PC-9 (cell line): ENCODE measurements at regions of chr3 and their contacts with region 1.

Region 1: DNA sequence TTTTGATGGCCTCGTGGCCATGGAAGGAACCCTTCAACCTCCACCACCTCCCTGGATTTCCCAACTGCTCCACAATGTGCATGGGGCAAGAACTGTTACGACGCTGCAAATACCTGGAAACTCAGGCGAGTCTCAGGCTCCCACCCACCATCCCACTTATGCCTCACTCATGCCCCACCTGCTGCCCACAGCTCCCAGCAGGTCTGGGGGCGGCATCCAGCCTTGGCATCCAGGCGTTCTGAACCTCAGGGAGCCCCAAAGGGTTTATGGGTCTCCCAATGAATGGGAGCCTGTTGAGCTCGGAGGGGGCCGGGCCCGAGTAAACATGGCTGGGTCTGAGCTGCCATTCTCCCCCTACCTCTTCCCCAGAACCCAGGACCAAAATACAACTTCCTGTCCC is 2.0 kb upstream of the PTH1R start:
- DNase-seq: no peak
- H3K4me3 ChIP-seq: no peak overlapping the region
- H3K27ac ChIP-seq: no peak overlapping the region
- H3K4me1 ChIP-seq: peaks cover 12% of the 10 kb centered on the region
- H3K27me3 ChIP-seq: no peaks in the 10 kb centered on the region
- CTCF ChIP-seq: no peak

Region 2: DNA sequence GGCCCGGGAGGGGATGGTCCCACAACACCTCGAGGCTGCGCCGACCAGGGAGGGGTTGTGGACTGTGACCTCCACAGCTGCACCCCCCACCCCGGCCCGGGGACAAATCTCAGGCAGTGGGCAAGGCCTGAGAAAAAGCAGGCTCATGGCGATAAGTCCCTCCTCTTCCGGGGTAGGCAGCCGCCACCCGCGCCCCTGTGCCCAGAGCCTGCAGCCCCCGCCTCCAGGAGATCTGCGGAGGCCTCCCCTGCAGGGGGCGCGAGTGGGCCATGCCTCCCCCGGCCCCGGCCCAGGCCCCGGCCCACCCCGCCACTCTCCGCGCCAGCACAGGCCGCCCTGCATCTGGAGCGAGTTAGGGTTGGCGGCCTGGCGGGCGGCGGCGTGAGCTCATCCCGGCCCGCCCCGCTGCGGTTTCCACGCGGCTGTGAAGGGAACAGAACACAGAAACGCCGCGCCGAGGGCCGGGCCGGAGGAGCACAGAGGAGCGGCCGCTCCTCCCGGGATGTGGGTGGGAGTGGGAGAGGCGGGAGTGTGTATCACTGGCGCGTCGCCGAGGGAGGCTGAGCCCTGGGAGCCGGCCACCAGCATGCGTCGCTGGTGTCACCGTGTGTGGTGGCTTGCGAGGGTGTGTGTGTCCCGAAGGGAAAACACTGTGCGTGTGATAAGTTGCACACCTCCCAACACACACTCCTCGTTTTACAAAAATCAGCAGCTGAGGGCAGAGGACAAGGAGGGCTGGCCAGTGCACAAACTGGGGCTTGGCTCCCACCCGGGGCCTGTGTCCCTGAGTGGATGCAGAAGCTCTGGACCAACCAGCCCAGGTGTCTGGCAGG is 29.6 kb before region 1 on chr3:
- CTCF ChIA-PET with region 1: interaction called, 13 read pairs
- POLR2A ChIA-PET with region 1: no interaction called
- intact Hi-C with region 1: no loop called
- DNase-seq: peak in 1 of 2 experiments; percentile 88
- H3K4me3 ChIP-seq: peak overlapping the region; percentile 59; the same call in 1 of the 2 replicates
- H3K27ac ChIP-seq: no peak overlapping the region
- H3K4me1 ChIP-seq: 0 out of 2 replicates have a peak, but pooled peaks cover 5% of the 10 kb centered on the region
- H3K27me3 ChIP-seq: no peaks in the 10 kb centered on the region
- CTCF ChIP-seq: peak; percentile 48; the same call in 1 of the 2 replicates

Region 3: DNA sequence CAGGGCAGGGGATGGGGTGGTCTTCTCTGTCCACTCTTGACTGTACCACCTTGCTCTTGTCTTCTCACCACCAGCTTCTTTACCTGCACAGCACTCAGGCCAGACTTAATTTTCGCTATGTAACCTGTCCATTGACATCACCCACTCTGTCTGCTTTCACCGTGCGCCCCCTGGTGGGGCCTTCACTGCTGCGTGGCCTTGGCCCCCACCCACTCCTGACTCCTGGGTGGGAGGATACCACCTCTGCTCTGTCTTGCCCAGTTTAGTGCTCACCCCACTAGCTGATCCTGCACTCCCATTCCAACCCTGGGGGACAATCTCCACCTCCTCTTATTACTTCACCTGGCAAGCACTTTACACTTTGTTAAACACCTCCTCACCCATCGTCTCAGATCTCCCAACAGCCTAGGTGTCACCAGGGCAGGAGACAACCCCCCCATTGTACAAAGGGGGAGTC is 19.7 kb after region 1 on chr3:
- CTCF ChIA-PET with region 1: no interaction called
- POLR2A ChIA-PET with region 1: no interaction called
- intact Hi-C with region 1: no loop called
- DNase-seq: peak in 1 of 2 experiments; percentile 68
- H3K4me3 ChIP-seq: no peak overlapping the region
- H3K27ac ChIP-seq: no peak overlapping the region
- H3K4me1 ChIP-seq: 0 out of 2 replicates have a peak, but pooled peaks cover 4% of the 10 kb centered on the region
- H3K27me3 ChIP-seq: no peaks in the 10 kb centered on the region
- CTCF ChIP-seq: peak; percentile 86